IMR-90 (cell line): ENCODE measurements at regions of chr1 and their contacts with region 1.

Region 1: DNA sequence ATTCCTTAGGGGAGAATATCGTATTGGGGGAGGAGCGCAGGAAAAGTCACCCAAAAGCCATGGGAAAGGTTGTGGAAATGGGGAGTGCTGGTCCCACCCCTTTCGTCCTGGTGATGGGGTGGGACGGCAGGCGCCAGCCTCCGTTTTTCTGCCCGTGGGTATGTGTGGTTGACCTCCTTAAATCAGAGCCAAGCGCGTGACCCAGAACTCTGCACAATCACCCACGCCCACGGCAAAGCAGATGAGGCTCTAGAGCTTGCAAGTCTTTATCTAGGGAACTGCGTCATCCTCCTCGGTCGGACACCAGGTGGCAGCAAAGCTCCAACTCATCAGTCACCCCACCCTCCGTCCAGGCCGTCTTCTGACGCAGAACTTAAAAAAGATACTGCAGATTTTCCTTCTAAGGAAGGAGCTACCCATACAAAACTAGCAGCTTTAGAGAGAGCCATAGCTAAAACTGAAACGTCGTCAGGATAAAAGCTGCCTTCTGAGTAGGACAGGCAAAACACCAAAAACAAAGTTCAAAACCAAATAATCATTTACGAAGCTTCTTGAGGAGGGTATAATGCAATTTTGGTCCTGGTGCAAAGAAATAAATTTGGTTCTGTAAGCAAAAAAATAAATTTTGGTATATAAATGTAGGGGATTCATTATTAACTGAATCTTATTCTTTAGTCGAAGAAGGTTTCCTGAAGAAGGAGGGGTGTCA is 62.0 kb downstream of the TBX19 start:
- DNase-seq: peak; percentile 91
- ATAC-seq: peak; percentile 98
- H3K4me3 ChIP-seq: no peak overlapping the region
- H3K27ac ChIP-seq: no peak overlapping the region
- H3K4me1 ChIP-seq: no peaks in the 10 kb centered on the region
- H3K27me3 ChIP-seq: peaks cover 2% of the 10 kb centered on the region
- CTCF ChIP-seq: peak; percentile 86
- POLR2A ChIP-seq: no peak
- RAD21 ChIP-seq: peak; percentile 75

Region 2: DNA sequence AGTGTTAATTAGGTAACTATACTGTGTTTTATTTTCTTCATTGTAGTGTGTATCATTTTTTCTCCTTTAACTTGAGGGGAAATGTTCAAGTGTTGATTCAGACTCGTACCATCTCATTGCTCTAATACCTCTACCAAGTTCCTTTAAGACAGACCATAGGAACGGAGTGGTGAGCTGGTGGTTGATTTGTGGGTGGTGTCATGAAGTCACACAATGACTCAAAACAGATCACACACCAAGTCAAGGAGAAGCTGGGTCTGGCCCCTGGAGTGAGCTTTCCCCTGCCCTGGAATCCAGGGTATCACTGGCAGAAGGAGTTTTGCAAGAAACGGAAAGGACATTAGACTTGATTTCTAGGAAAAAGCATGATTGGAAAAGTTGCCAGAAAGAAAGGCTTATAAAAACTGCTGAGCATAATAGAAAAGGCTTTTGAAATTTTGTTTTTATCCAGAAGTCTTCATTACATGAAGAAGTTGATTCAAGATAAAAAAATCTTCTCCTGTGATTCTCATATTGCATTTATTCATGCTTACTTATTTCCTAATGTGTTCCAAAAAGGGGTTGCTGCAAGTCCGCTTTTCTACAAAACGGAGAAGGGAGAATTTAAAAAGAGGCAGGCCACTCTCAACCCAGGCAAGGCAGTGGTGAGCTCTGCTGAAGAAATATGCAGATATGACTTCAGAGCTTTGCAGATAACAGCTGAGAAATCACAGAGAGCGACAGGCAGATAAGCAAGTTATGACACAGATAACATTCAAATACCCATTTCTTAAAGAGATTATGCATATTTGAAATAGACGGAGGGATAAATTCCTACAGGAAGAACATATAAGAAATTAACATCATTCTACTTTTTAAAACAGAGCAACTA is 17.7 kb after region 1 on chr1:
- CTCF ChIA-PET with region 1: interaction called, 11 read pairs
- POLR2A ChIA-PET with region 1: no interaction called
- dilution Hi-C with region 1: no loop called
- in situ Hi-C with region 1: no loop called
- intact Hi-C with region 1: no loop called
- DNase-seq: no peak
- ATAC-seq: no peak
- H3K4me3 ChIP-seq: no peak overlapping the region
- H3K27ac ChIP-seq: no peak overlapping the region
- H3K4me1 ChIP-seq: no peaks in the 10 kb centered on the region
- H3K27me3 ChIP-seq: peaks cover 1% of the 10 kb centered on the region; the same call in 1 of the 2 replicates
- CTCF ChIP-seq: no peak
- POLR2A ChIP-seq: no peak
- RAD21 ChIP-seq: no peak

Region 3: GRCh38 chr1:168439456-168440375 is 97.0 kb after region 1 on chr1:
- CTCF ChIA-PET with region 1: interaction called, 12 read pairs
- POLR2A ChIA-PET with region 1: no interaction called
- dilution Hi-C with region 1: no loop called
- in situ Hi-C with region 1: no loop called
- intact Hi-C with region 1: loop called (anchors 1 kb)
- DNase-seq: peak; percentile 84
- ATAC-seq: peak; percentile 98
- H3K4me3 ChIP-seq: peak overlapping the region; percentile 24; the same call in 1 of the 2 replicates
- H3K27ac ChIP-seq: no peak overlapping the region
- H3K4me1 ChIP-seq: no peaks in the 10 kb centered on the region
- H3K27me3 ChIP-seq: peaks cover 5% of the 10 kb centered on the region; the same call in 1 of the 2 replicates
- CTCF ChIP-seq: peak; percentile 89
- POLR2A ChIP-seq: no peak
- RAD21 ChIP-seq: peak; percentile 93

Region 4: GRCh38 chr1:168572633-168573032 is 229.9 kb after region 1 on chr1:
- CTCF ChIA-PET with region 1: interaction called, 5 read pairs
- POLR2A ChIA-PET with region 1: no interaction called
- dilution Hi-C with region 1: no loop called
- in situ Hi-C with region 1: no loop called
- intact Hi-C with region 1: loop called (anchors 2 kb)
- DNase-seq: no peak
- ATAC-seq: no peak
- H3K4me3 ChIP-seq: no peak overlapping the region
- H3K27ac ChIP-seq: no peak overlapping the region
- H3K4me1 ChIP-seq: no peaks in the 10 kb centered on the region
- H3K27me3 ChIP-seq: peaks cover 3% of the 10 kb centered on the region; the same call in 1 of the 2 replicates
- CTCF ChIP-seq: no peak
- POLR2A ChIP-seq: no peak
- RAD21 ChIP-seq: no peak

Region 5: GRCh38 chr1:169060906-169061639 is 718.3 kb after region 1 on chr1:
- CTCF ChIA-PET with region 1: no interaction called
- POLR2A ChIA-PET with region 1: no interaction called
- dilution Hi-C with region 1: no loop called
- in situ Hi-C with region 1: no loop called
- intact Hi-C with region 1: no loop called
- DNase-seq: no peak
- ATAC-seq: no peak
- H3K4me3 ChIP-seq: no peak overlapping the region
- H3K27ac ChIP-seq: no peak overlapping the region
- H3K4me1 ChIP-seq: no peaks in the 10 kb centered on the region
- H3K27me3 ChIP-seq: no peaks in the 10 kb centered on the region
- CTCF ChIP-seq: no peak
- POLR2A ChIP-seq: no peak
- RAD21 ChIP-seq: no peak

Region 6: DNA sequence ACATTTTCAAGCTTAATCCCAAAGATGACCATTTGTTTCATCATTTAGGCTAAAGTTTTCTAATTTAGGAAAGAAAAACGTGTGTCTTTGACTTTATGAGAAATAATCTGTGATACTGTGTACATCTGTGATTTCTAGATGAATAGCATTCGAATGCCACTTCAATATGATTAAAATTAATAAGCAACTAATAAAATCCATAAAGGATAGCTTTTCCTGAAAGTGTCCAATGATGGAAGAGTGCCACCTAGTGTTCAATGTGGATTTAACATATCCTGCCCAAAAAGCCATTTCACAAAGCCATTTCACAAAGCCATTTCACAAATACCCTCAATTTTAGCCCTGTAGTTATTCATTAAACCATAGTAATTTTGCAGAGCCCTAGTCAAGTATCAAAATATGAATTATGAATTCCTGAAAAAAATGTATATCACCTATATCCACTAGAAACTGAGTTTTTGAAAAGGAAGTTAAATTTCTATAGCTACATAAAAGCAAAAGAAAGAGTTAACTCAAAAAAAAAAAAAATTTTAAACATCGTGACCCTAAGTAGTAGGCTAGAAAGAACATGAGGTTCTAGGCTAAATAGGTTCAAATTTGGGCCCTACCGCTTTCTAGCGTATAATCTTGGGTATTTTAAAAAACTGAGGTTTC is 1005.8 kb after region 1 on chr1:
- CTCF ChIA-PET with region 1: interaction called, 3 read pairs
- POLR2A ChIA-PET with region 1: no interaction called
- dilution Hi-C with region 1: no loop called
- in situ Hi-C with region 1: loop called (anchors 25 kb)
- intact Hi-C with region 1: loop called (anchors 2 kb)
- DNase-seq: peak; percentile 68
- ATAC-seq: peak; percentile 62; the same call in 1 of the 2 replicates
- H3K4me3 ChIP-seq: no peak overlapping the region
- H3K27ac ChIP-seq: no peak overlapping the region
- H3K4me1 ChIP-seq: no peaks in the 10 kb centered on the region
- H3K27me3 ChIP-seq: no peaks in the 10 kb centered on the region
- CTCF ChIP-seq: peak; percentile 86
- POLR2A ChIP-seq: no peak
- RAD21 ChIP-seq: peak; percentile 90

Region 7: GRCh38 chr1:169367486-169368405 is 1025.0 kb after region 1 on chr1 and contains the starts of genes BLZF1 and NME7:
- CTCF ChIA-PET with region 1: interaction called, 3 read pairs
- POLR2A ChIA-PET with region 1: no interaction called
- dilution Hi-C with region 1: no loop called
- in situ Hi-C with region 1: loop called (anchors 25 kb)
- intact Hi-C with region 1: no loop called
- DNase-seq: peak; percentile 96
- ATAC-seq: peak; percentile 99
- H3K4me3 ChIP-seq: peak within 1 kb of the TSS; percentile 48
- H3K27ac ChIP-seq: peak within 1 kb of the TSS; percentile 62
- H3K4me1 ChIP-seq: 0 out of 2 replicates have a peak, but pooled peaks cover 4% of the 10 kb centered on the region
- H3K27me3 ChIP-seq: no peaks in the 10 kb centered on the region
- CTCF ChIP-seq: no peak
- POLR2A ChIP-seq: peak; percentile 81
- RAD21 ChIP-seq: no peak
- total RNA-seq, gene BLZF1: 24.2 and 38.9 TPM in 2 replicates
- total RNA-seq, gene NME7: 18.3 and 44.4 TPM in 2 replicates